HCT116 (cell line): ENCODE measurements at regions of chr20 and their contacts with region 1.

Region 1: DNA sequence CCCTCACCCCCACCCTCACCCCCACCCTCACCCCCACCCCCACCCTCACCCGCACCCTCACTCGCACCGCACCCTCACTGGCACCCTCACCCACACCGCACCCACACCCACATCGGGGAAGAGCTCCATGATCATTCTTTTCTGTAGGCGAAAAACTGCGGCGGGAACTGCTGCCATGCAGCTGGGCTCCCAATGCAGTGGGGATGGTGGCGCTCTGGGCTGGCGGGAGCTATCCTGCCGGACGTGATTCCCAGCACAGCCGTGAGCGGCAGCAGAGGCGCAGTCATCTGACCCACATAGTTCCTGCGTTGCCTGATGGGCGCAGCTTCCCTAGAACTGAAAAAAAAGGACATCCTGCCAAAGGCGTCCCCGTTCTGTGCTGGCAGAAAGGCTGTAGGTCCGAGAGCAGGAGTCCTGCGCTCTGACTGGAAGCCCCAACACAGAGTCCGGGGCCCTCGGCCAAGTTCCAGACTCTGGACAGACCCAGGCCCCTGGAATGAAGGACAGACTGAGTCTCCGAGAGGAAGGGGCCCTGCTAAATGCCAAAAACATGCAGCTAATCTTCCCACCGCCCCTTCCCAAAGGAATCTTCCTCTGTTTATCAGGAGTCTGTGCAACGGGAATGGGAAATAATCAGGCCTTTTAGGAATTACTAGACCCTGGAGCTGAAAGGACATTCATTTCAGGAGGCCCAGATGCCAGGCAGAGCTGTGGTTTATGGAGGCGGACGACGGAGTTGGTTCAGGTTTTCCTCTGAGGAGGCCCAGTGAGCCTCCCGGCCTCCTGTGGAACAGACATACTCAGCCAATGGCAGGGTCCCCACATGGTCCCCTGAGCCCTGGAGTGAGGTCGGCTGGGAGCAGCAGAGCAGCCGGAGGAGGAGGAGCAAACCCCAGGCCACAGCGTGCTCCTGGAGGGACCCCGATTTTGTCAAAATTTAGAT is 14.1 kb upstream of the TCFL5 start:
- DNase-seq: peak; percentile 71
- ATAC-seq: peak; percentile 92
- H3K4me3 ChIP-seq: peak overlapping the region; percentile 18 to 30; a peak in 3 of 4 replicates
- H3K27ac ChIP-seq: peak overlapping the region; percentile 77
- H3K4me1 ChIP-seq: peaks cover 13 to 26% of the 10 kb centered on the region in 2 experiments
- H3K27me3 ChIP-seq: no peaks in the 10 kb centered on the region
- CTCF ChIP-seq: peak; percentile 54 to 59 (median 56); a peak in 5 of 6 replicates
- POLR2A ChIP-seq: no peak
- RAD21 ChIP-seq: peak; percentile 35; the same call in 1 of the 2 replicates

Region 2: GRCh38 chr20:62861726-62862336 is 13.9 kb before region 1 on chr20 and contains the start of gene TCFL5:
- CTCF ChIA-PET with region 1: interaction called, 10 read pairs
- POLR2A ChIA-PET with region 1: interaction called, 6 read pairs
- RAD21 ChIA-PET with region 1: no interaction called
- intact Hi-C with region 1: no loop called
- DNase-seq: peak; percentile 81
- ATAC-seq: peak; percentile 89
- H3K4me3 ChIP-seq: peak within 1 kb of the TSS; percentile 60 to 75
- H3K27ac ChIP-seq: peak within 1 kb of the TSS; percentile 68
- H3K4me1 ChIP-seq: peaks cover 7 to 16% of the 10 kb centered on the region in 2 experiments; a peak in 3 of 4 replicates
- H3K27me3 ChIP-seq: no peaks in the 10 kb centered on the region
- CTCF ChIP-seq: no peak
- POLR2A ChIP-seq: no peak
- RAD21 ChIP-seq: no peak
- total RNA-seq, gene TCFL5: 20.4 TPM

Region 3: GRCh38 chr20:62907384-62908317 is 32.0 kb after region 1 on chr20:
- CTCF ChIA-PET with region 1: no interaction called
- POLR2A ChIA-PET with region 1: no interaction called
- RAD21 ChIA-PET with region 1: no interaction called
- intact Hi-C with region 1: no loop called
- DNase-seq: no peak
- ATAC-seq: peak; percentile 75
- H3K4me3 ChIP-seq: no peak overlapping the region
- H3K27ac ChIP-seq: no peak overlapping the region
- H3K4me1 ChIP-seq: no peaks in the 10 kb centered on the region
- H3K27me3 ChIP-seq: no peaks in the 10 kb centered on the region
- CTCF ChIP-seq: peak in 2 of 3 experiments; percentile 59 to 64; a peak in 4 of 6 replicates
- POLR2A ChIP-seq: no peak
- RAD21 ChIP-seq: peak; percentile 8; the same call in 1 of the 2 replicates